ENCODE measurements at regions of chr19 and their contacts with region 1.

Region 1: GRCh38 chr19:18985257-18985656 is 44.2 kb upstream of the HOMER3 start:
- DNase-seq: no peak
- ATAC-seq: no peak
- H3K4me3 ChIP-seq: no peak overlapping the region
- H3K27ac ChIP-seq: no peak overlapping the region
- H3K4me1 ChIP-seq: no peaks in the 10 kb centered on the region
- H3K27me3 ChIP-seq: no peaks in the 10 kb centered on the region
- CTCF ChIP-seq: no peak

Region 2: GRCh38 chr19:18663940-18664530 is 321.2 kb before region 1 on chr19:
- CTCF ChIA-PET with region 1: no interaction called
- POLR2A ChIA-PET with region 1: no interaction called
- intact Hi-C with region 1: no loop called
- DNase-seq: no peak
- ATAC-seq: no peak
- H3K4me3 ChIP-seq: no peak overlapping the region
- H3K27ac ChIP-seq: no peak overlapping the region
- H3K4me1 ChIP-seq: no peaks in the 10 kb centered on the region
- H3K27me3 ChIP-seq: no peaks in the 10 kb centered on the region
- CTCF ChIP-seq: no peak

Region 3: GRCh38 chr19:18742838-18743783 is 242.1 kb before region 1 on chr19:
- CTCF ChIA-PET with region 1: no interaction called
- POLR2A ChIA-PET with region 1: no interaction called
- intact Hi-C with region 1: no loop called
- DNase-seq: no peak
- ATAC-seq: no peak; the same call in 1 of the 2 replicates
- H3K4me3 ChIP-seq: no peak overlapping the region
- H3K27ac ChIP-seq: no peak overlapping the region
- H3K4me1 ChIP-seq: peaks cover 9% of the 10 kb centered on the region; the same call in 1 of the 2 replicates
- H3K27me3 ChIP-seq: no peaks in the 10 kb centered on the region
- CTCF ChIP-seq: no peak

Region 4: GRCh38 chr19:18919086-18919899 is 66.0 kb before region 1 on chr19 and contains the starts of genes COPE and DDX49:
- CTCF ChIA-PET with region 1: interaction called, 12 read pairs
- POLR2A ChIA-PET with region 1: interaction called, 20 read pairs
- intact Hi-C with region 1: loop called (anchors 1 kb)
- DNase-seq: peak; percentile 99
- ATAC-seq: peak; percentile 97
- H3K4me3 ChIP-seq: peak within 1 kb of the TSS; percentile 97
- H3K27ac ChIP-seq: peak within 1 kb of the TSS; percentile 58
- H3K4me1 ChIP-seq: peaks cover 16% of the 10 kb centered on the region
- H3K27me3 ChIP-seq: no peaks in the 10 kb centered on the region
- CTCF ChIP-seq: no peak
- total RNA-seq, gene COPE: 408 and 410 TPM in 2 replicates
- total RNA-seq, gene DDX49: 120 and 145 TPM in 2 replicates

Region 5: GRCh38 chr19:18940769-18941407 is 44.4 kb before region 1 on chr19 and contains the start of gene HOMER3:
- CTCF ChIA-PET with region 1: no interaction called
- POLR2A ChIA-PET with region 1: no interaction called
- intact Hi-C with region 1: loop called (anchors 1 kb)
- DNase-seq: peak; percentile 72
- ATAC-seq: peak; percentile 86
- H3K4me3 ChIP-seq: peak within 1 kb of the TSS; percentile 95
- H3K27ac ChIP-seq: no peak within 1 kb of the TSS
- H3K4me1 ChIP-seq: peaks cover 6% of the 10 kb centered on the region
- H3K27me3 ChIP-seq: no peaks in the 10 kb centered on the region
- CTCF ChIP-seq: no peak
- total RNA-seq, gene HOMER3: 118 and 143 TPM in 2 replicates

Region 6: GRCh38 chr19:18969899-18970298 is 15.4 kb before region 1 on chr19:
- CTCF ChIA-PET with region 1: interaction called, 4 read pairs
- POLR2A ChIA-PET with region 1: interaction called, 4 read pairs
- intact Hi-C with region 1: loop called (anchors 2 kb)
- DNase-seq: no peak
- ATAC-seq: peak; percentile 18
- H3K4me3 ChIP-seq: no peak overlapping the region
- H3K27ac ChIP-seq: peak overlapping the region; percentile 88
- H3K4me1 ChIP-seq: peaks cover 29% of the 10 kb centered on the region
- H3K27me3 ChIP-seq: no peaks in the 10 kb centered on the region
- CTCF ChIP-seq: no peak